Naive thymus-derived CD8-positive, alpha-beta T cell (primary cell): ENCODE measurements at regions of chr5 and their contacts with region 1.

Region 1: GRCh38 chr5:55927772-55928662 is 66.7 kb downstream of the IL6ST start:
- DNase-seq: no peak
- ATAC-seq: no peak
- H3K4me3 Mint-ChIP-seq: no peak overlapping the region
- H3K27ac Mint-ChIP-seq: no peak overlapping the region
- H3K4me1 Mint-ChIP-seq: peaks cover 4 to 11% (median 8%) of the 10 kb centered on the region in 4 donors
- H3K27me3 Mint-ChIP-seq: no peaks in the 10 kb centered on the region

Region 2: GRCh38 chr5:56154732-56155484 is 226.9 kb after region 1 on chr5:
- POLR2A ChIA-PET with region 1: interaction called, 10 read pairs
- DNase-seq: peak in 6 of 10 donors; percentile 12 to 53 (median 32)
- ATAC-seq: peak; percentile 73 to 74
- H3K4me3 Mint-ChIP-seq: peak overlapping the region; percentile 1 to 72 (median 55)
- H3K27ac Mint-ChIP-seq: peak overlapping the region; percentile 61 to 94 (median 86)
- H3K4me1 Mint-ChIP-seq: peaks cover 32 to 73% (median 67%) of the 10 kb centered on the region in 4 donors
- H3K27me3 Mint-ChIP-seq: no peaks in the 10 kb centered on the region